Esophagus muscularis mucosa (tissue), 4 donors: ENCODE measurements at regions of chr12 and their contacts with region 1.

Region 1: GRCh38 chr12:106386813-106387535 is 29.4 kb downstream of the POLR3B start:
- DNase-seq: no peak
- H3K4me3 ChIP-seq: no peak overlapping the region
- H3K27ac ChIP-seq: no peak overlapping the region
- H3K4me1 ChIP-seq: no peaks in the 10 kb centered on the region
- H3K27me3 ChIP-seq: no peaks in the 10 kb centered on the region
- CTCF ChIP-seq: no peak
- EP300 ChIP-seq: no peak
- POLR2A ChIP-seq: no peak

Region 2: DNA sequence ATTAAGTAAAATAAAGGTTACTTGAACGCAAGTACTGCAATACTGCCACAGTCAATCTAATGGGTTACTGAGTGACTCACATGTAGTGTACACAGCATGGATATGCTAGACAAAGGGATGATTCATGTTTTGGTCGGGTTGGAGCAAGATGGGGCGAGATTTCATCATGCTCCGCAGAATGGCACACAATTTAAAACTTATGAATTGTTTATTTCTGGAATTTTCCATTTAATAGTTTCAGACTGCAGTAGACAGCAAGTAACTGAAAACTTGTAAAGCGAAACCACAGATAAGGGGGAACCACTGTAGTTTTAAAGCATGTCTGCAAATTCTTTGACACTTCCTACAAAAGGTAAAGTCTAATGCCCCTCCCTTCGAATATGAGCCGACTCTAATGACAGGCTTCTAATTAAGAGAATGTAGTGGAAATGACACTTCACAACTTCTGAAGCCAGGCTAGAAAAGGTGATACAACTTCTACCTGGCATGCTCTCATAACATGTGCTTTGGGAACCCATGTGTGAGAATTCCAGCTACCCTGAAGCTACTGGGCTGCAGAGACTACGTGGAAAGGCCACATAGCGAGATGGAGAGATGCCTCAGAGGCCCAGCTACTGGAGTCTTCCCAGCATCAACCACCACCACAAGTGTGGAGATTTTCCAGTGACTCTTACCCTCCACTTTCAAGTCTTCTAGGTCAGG is 98.3 kb before region 1 on chr12:
- intact Hi-C with region 1: no loop called
- DNase-seq: no peak
- H3K4me3 ChIP-seq: no peak overlapping the region
- H3K27ac ChIP-seq: no peak overlapping the region
- H3K4me1 ChIP-seq: peaks cover 0 to 5% (median 0%) of the 10 kb centered on the region in 4 donors
- H3K27me3 ChIP-seq: no peaks in the 10 kb centered on the region
- CTCF ChIP-seq: no peak
- EP300 ChIP-seq: no peak
- POLR2A ChIP-seq: no peak

Region 3: DNA sequence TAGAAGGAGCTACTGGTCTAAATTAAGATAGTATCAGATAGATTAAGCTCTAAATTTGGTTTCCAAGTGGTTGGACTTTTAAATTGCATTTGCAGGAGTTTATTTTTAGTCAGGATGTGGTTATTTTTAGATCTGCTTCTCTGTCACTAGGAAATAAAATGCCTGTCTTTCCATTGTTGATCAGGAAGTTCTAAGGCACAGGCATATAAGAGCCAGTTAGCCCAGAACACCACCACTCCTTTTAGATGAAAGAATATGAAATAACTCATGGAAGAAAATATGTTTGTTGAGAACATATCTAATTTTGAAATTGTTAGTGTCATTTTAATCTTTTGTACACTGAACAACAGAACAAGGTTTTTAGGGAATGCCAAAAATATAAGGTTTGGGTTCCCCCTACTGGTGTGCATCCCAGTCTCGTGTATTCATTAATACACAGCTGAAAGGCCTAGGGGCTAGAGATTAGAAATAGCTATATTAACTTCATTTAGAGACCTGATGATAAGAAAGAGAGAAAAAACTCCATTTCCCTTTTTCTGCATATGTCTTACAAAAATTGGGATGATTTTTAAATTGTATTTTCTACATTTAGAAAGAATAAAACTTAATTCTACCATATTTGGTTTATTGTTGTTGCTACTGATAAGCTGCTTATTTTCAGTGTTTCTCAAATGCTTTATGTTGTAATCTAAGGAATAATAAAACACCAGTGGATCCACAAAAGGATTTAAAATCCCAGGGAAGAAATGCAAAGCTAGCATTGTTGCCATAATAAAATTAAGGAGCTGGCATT is 454.7 kb after region 1 on chr12:
- intact Hi-C with region 1: loop called (anchors 5 kb)
- DNase-seq: no peak
- H3K4me3 ChIP-seq: no peak overlapping the region
- H3K27ac ChIP-seq: peak overlapping the region in 1 of 4 donors; percentile 15
- H3K4me1 ChIP-seq: peaks cover 22 to 33% (median 27%) of the 10 kb centered on the region in 4 donors
- H3K27me3 ChIP-seq: no peaks in the 10 kb centered on the region
- CTCF ChIP-seq: peak; percentile 46 to 54 (median 50)
- EP300 ChIP-seq: no peak
- POLR2A ChIP-seq: no peak

Region 4: GRCh38 chr12:106919910-106920544 is 533.1 kb after region 1 on chr12:
- intact Hi-C with region 1: loop called (anchors 1 kb)
- DNase-seq: no peak
- H3K4me3 ChIP-seq: no peak overlapping the region
- H3K27ac ChIP-seq: no peak overlapping the region
- H3K4me1 ChIP-seq: no peaks in the 10 kb centered on the region
- H3K27me3 ChIP-seq: no peaks in the 10 kb centered on the region
- CTCF ChIP-seq: peak; percentile 74 to 83 (median 79)
- EP300 ChIP-seq: no peak
- POLR2A ChIP-seq: no peak

Region 5: GRCh38 chr12:107109741-107110719 is 723.1 kb after region 1 on chr12:
- intact Hi-C with region 1: loop called (anchors 10 kb)
- DNase-seq: peak; percentile 90
- H3K4me3 ChIP-seq: peak overlapping the region in 3 of 4 donors; percentile 22 to 36 (median 24)
- H3K27ac ChIP-seq: no peak overlapping the region
- H3K4me1 ChIP-seq: peaks cover 0 to 16% (median 14%) of the 10 kb centered on the region in 4 donors
- H3K27me3 ChIP-seq: no peaks in the 10 kb centered on the region
- CTCF ChIP-seq: no peak
- EP300 ChIP-seq: no peak
- POLR2A ChIP-seq: no peak